ENCODE measurements at regions of chr12 and their contacts with region 1.

Region 1: GRCh38 chr12:121060149-121061001 is 21.3 kb upstream of the OASL start:
- DNase-seq: peak; percentile 52
- H3K4me3 Mint-ChIP-seq: no peak overlapping the region
- H3K27ac Mint-ChIP-seq: no peak overlapping the region
- H3K4me1 Mint-ChIP-seq: no peaks in the 10 kb centered on the region
- H3K27me3 Mint-ChIP-seq: no peaks in the 10 kb centered on the region
- CTCF ChIP-seq: peak; percentile 52

Region 2: DNA sequence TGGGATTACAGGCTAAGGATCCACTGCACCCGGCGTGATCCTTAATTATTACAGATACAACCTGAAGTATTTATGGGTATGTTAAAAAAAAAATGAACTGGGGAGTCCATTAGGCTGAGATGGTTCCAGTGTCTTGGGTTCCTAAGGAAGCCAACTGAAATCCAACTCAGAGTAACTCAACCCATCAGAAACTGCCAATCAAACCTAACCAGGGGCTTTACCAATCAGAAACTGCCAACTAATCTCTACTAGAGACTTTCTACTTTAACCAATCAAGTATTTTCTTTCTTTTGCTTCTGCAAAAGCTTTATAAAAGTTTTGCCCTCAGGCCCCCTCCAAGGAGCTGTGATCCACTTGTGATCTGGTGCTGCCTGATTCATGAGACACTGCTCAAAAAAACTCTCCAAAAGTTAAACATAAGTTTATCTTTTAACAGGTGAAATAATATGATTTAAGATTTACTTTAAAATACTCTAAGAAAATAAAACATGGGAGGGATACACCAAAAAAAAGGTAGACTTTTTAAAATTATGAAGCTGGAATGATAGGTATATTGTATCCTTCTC is 246.7 kb before region 1 on chr12:
- CTCF ChIA-PET with region 1: no interaction called
- POLR2A ChIA-PET with region 1: no interaction called
- intact Hi-C with region 1: no loop called
- DNase-seq: no peak
- H3K4me3 Mint-ChIP-seq: no peak overlapping the region
- H3K27ac Mint-ChIP-seq: no peak overlapping the region
- H3K4me1 Mint-ChIP-seq: no peaks in the 10 kb centered on the region
- H3K27me3 Mint-ChIP-seq: no peaks in the 10 kb centered on the region
- CTCF ChIP-seq: no peak

Region 3: DNA sequence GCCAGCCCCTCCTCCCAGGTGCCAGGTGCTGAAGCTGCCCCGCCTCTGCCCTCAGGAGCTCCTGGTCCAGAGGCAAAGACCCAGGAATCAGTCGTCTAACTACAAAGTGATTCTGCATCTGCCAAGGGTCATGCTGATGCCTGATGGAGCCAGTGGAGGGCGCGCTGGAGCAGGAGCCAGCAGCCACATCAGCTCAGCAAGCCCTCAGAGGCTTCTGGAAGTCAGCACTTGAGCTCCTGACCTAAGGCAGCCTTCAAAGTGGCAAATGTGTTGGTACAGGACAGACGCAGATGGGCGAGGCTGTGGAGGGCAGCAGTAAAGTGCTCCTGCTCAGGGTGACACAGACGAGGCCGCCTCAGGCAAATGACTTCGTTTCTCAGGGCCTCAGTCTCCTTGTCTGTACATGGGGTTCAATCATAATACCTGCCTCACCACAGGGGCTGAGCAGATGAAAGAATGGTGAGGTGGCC is 55.0 kb before region 1 on chr12:
- CTCF ChIA-PET with region 1: interaction called, 3 read pairs
- POLR2A ChIA-PET with region 1: interaction called, 3 read pairs
- intact Hi-C with region 1: loop called (anchors 5 kb)
- DNase-seq: peak; percentile 53
- H3K4me3 Mint-ChIP-seq: no peak overlapping the region
- H3K27ac Mint-ChIP-seq: no peak overlapping the region
- H3K4me1 Mint-ChIP-seq: no peaks in the 10 kb centered on the region
- H3K27me3 Mint-ChIP-seq: no peaks in the 10 kb centered on the region
- CTCF ChIP-seq: peak; percentile 79

Region 4: DNA sequence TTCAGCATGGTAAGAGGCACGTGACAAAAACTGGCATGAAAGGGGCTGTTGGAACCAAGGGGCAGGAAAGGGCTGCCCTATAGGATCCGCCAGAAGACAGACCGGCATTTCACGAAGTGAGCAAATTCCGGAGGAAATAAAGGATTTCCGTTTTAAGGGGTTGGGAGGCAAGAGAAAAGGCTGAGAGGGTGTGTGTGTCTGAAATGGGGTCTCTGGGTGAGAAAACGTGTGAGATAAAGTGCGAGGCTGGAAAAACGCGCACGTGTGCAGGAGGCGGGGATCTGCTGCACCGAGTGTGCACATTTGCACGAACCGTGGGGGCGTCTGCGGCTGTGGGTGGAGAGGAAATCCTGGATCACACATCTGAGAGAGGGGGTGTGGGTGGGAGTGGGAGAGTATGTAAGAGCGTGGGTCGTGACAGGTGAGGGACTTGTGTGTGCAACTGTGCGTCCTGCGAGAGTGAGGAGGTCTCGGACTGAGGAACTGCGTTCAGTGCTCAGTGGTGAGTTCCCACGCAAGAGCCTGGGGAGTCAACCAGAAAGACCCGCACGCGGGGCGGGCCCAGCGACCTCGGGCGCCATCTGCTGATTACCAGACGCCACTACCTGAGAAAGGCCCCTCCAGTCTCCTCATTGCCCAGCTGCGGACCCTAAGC is 35.3 kb after region 1 on chr12:
- CTCF ChIA-PET with region 1: interaction called, 3 read pairs
- POLR2A ChIA-PET with region 1: no interaction called
- intact Hi-C with region 1: loop called (anchors 2 kb)
- DNase-seq: peak; percentile 57
- H3K4me3 Mint-ChIP-seq: peak overlapping the region; percentile 47
- H3K27ac Mint-ChIP-seq: no peak overlapping the region
- H3K4me1 Mint-ChIP-seq: peaks cover 9% of the 10 kb centered on the region
- H3K27me3 Mint-ChIP-seq: peaks cover 12% of the 10 kb centered on the region
- CTCF ChIP-seq: peak; percentile 90

Region 5: GRCh38 chr12:121230538-121230907 is 170.1 kb after region 1 on chr12:
- CTCF ChIA-PET with region 1: interaction called, 4 read pairs
- POLR2A ChIA-PET with region 1: no interaction called
- intact Hi-C with region 1: loop called (anchors 2 kb)
- DNase-seq: no peak
- H3K4me3 Mint-ChIP-seq: no peak overlapping the region
- H3K27ac Mint-ChIP-seq: no peak overlapping the region
- H3K4me1 Mint-ChIP-seq: no peaks in the 10 kb centered on the region
- H3K27me3 Mint-ChIP-seq: no peaks in the 10 kb centered on the region
- CTCF ChIP-seq: no peak